IMR-90 (cell line): ENCODE measurements at regions of chr3 and their contacts with region 1.

Region 1: DNA sequence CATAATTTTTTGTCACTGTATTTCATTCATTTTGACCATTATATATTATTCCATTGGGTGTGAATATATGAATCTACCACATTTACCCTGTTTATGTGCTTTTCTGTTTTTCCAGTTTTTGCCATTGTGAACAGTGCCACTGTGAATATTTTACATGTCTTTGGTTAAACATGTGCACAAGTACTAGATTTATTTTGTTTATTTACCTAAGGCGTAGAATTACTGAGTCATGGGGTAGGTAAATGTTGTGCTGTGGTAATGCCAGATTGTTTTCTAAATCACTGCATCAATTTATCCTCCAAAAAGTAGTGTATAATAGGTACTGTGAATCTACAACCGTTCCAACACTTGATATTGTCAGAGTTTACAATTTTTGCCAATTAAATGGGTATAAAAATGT is 362.1 kb upstream of the AGTR1 start:
- DNase-seq: no peak
- ATAC-seq: no peak
- H3K4me3 ChIP-seq: no peak overlapping the region
- H3K27ac ChIP-seq: no peak overlapping the region
- H3K4me1 ChIP-seq: peaks cover 2% of the 10 kb centered on the region; the same call in 1 of the 2 replicates
- H3K27me3 ChIP-seq: no peaks in the 10 kb centered on the region
- CTCF ChIP-seq: no peak
- POLR2A ChIP-seq: no peak
- RAD21 ChIP-seq: no peak

Region 2: GRCh38 chr3:148246291-148246923 is 89.2 kb before region 1 on chr3:
- CTCF ChIA-PET with region 1: no interaction called
- POLR2A ChIA-PET with region 1: interaction called, 10 read pairs
- dilution Hi-C with region 1: no loop called
- in situ Hi-C with region 1: no loop called
- intact Hi-C with region 1: no loop called
- DNase-seq: no peak
- ATAC-seq: no peak
- H3K4me3 ChIP-seq: no peak overlapping the region
- H3K27ac ChIP-seq: no peak overlapping the region
- H3K4me1 ChIP-seq: no peaks in the 10 kb centered on the region
- H3K27me3 ChIP-seq: no peaks in the 10 kb centered on the region
- CTCF ChIP-seq: no peak
- POLR2A ChIP-seq: no peak
- RAD21 ChIP-seq: no peak